Activated CD8-positive, alpha-beta memory T cell treated with anti-CD3 and anti-CD28 coated beads, Interleukin-2, amount 10 ng/mL, durations not matched to agents 7 days and 5 days (primary cell): ENCODE measurements at regions of chr10 and their contacts with region 1.

Region 1: DNA sequence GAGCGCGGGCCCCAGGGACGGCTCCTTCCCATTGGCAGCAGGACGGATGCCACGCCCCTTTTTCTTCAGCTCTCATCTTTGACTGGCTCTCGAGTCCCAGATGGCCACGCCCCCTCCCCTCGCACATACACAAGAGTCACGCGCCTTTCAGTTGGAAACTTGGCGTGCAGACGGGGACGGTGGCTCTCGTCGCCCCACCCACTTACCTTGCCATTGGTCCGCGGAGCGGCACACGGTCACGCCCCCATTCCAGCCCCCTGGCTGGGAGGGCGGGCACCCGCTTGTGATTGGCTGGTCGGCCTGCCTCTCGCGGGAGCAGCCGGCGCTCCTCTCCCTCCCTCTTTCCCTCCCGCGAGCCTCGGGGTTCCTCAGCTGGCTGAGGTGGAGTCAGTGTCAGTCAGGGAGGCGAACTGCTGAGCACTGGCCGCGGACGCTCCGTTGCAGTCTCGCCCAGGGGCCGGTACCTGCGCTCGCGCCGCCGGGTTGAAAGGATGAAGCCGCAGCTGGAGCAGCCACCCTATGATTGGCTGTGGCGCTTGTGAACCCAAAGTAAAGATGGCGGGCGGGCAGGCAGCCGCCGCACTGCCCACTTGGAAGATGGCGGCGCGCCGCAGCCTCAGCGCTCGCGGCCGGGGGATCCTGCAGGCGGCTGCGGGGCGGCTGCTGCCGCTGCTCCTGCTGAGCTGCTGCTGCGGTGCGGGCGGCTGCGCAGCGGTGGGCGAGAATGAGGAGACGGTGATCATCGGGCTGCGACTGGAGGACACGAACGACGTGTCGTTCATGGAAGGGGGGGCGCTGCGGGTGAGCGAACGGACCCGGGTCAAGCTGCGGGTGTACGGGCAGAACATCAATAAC is at the start of gene CNNM2:
- DNase-seq: peak; percentile 100
- ATAC-seq: peak; percentile 91
- H3K4me3 Mint-ChIP-seq: peak within 1 kb of the TSS; percentile 90
- H3K27ac Mint-ChIP-seq: peak within 1 kb of the TSS; percentile 92
- H3K4me1 Mint-ChIP-seq: peaks cover 61% of the 10 kb centered on the region
- H3K27me3 Mint-ChIP-seq: no peaks in the 10 kb centered on the region
- total RNA-seq, gene CNNM2: 8.0 to 10.1 TPM

Region 2: GRCh38 chr10:102904346-102904745 is 13.8 kb before region 1 on chr10:
- CTCF ChIA-PET with region 1: interaction called, 47 read pairs
- DNase-seq: no peak
- ATAC-seq: no peak
- H3K4me3 Mint-ChIP-seq: no peak overlapping the region
- H3K27ac Mint-ChIP-seq: no peak overlapping the region
- H3K4me1 Mint-ChIP-seq: no peaks in the 10 kb centered on the region
- H3K27me3 Mint-ChIP-seq: no peaks in the 10 kb centered on the region

Region 3: DNA sequence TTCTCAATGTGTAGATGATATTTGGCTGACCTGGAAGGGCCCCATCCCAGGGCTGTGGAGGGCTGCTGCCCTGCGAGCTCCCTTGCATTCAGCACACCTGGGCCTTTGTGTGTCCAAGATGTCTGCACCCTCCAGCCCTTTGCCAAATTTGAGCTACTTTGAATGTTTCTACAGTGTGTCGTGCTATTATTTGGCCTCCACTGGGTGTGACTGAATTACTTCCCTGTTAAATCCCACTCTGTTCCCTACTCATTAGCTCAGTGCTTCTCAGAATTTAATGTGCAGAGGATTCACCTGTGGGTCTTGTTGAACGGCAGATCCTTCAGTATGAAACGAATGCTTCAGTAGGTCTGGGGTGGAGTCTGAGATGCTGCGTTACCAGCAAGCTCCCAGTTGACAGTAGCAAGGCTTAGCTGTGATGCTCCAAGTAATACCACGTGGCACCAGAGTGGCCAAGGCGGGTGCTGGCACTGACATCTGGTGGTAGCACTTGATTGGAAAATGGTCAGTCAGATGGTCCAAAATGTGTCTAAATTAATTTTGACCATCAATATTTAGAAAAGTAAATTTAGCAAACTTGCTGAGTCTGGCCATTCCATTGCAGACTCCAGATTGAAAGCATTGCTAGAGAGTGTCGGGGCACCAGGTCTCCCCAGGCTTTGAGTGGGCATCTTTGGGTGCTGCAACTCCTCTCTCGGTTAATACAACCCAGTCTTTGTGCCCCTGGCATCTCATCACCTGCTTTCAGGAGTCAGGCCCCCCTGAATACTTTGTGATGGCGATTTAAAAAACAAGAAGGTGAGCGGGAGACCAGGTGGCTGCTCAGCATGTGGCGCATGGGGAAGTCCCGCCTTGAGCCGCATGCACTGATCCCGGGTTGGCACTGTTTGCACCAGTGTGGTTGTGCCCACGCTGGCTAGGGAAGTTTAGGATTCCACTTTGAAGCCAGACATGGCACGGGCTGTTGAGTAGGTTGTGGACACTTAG is 144.7 kb after region 1 on chr10:
- CTCF ChIA-PET with region 1: interaction called, 92 read pairs
- DNase-seq: no peak
- ATAC-seq: peak; percentile 27
- H3K4me3 Mint-ChIP-seq: no peak overlapping the region
- H3K27ac Mint-ChIP-seq: no peak overlapping the region
- H3K4me1 Mint-ChIP-seq: peaks cover 1% of the 10 kb centered on the region
- H3K27me3 Mint-ChIP-seq: no peaks in the 10 kb centered on the region

Region 4: DNA sequence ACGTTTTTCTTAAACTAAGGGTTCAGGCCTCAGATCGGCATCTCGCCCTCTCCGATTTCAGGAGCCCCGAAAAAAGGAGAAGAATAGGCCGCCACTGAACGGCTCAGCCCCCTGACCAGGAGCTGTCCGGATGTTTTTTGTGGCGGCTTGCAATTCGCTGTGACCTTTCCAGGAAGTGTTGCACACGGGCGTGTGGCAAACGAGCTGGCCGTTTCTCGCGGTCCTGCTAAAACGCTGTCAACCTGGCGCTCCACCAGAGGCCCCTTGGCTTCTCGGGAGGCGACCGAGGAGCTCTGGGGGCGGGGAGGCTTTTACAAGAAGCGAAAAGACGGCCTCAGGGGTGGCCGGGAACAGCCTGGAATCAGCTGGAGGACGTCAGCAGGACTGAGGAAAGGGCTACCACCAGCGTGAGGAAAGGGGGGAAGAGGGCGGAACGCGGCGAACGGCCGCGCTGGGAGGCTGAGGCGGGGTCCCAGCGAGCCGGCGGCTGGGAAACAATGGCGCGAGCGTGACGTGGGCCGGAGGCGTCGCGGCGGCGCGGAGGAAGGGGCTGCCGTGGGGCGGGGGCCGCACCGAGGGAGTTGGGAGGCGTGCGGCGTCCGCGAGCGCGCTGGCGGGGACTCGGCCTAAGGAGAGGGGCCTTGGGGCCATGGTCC is 274.4 kb after region 1 on chr10:
- CTCF ChIA-PET with region 1: interaction called, 13 read pairs
- DNase-seq: peak; percentile 88
- ATAC-seq: peak; percentile 62
- H3K4me3 Mint-ChIP-seq: peak overlapping the region; percentile 98
- H3K27ac Mint-ChIP-seq: peak overlapping the region; percentile 99
- H3K4me1 Mint-ChIP-seq: peaks cover 39% of the 10 kb centered on the region
- H3K27me3 Mint-ChIP-seq: no peaks in the 10 kb centered on the region

Region 5: GRCh38 chr10:103333925-103334520 is 415.8 kb after region 1 on chr10:
- CTCF ChIA-PET with region 1: interaction called, 15 read pairs
- DNase-seq: no peak
- ATAC-seq: no peak
- H3K4me3 Mint-ChIP-seq: no peak overlapping the region
- H3K27ac Mint-ChIP-seq: no peak overlapping the region
- H3K4me1 Mint-ChIP-seq: peaks cover 2% of the 10 kb centered on the region
- H3K27me3 Mint-ChIP-seq: no peaks in the 10 kb centered on the region